CD8-positive, alpha-beta memory T cell (primary cell): ENCODE measurements at regions of chr6 and their contacts with region 1.

Region 1: DNA sequence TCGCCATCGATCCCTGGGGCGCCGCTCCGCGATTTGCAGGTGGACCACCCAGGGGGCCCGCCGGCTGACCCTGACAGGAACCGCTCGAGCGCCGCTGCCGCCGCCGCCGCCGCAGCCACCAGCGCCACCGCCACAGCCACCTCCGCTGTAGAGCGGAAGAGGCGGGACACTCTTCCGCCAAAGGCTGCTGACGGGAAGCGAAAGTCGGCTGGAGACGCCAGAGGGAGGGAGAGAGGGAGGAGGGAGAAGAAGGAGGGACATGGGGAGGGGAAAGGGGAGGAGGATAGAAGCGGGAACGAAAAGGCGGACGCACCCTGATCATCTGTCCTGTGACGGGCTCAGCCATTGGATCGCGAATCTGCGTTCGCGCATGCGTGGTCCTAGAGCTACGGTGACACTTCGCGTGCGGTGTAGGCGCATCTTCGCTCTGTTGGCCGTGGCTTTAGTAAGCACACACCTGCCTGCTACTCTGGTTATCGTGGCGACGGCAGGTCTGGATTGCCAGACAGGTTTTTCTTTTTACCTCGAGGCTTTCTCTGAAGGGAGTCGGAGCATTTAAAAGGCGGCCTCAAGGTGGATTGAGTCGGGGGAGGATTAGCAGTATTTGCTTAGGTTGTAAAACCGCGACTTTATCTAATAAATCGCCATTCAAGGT is at the start of gene TMEM30A:
- DNase-seq: peak; percentile 92 to 97 (median 95)
- H3K4me3 ChIP-seq: peak within 1 kb of the TSS; percentile 91
- H3K4me3 Mint-ChIP-seq: no peak within 1 kb of the TSS
- H3K27ac ChIP-seq: peak within 1 kb of the TSS; percentile 76
- H3K27ac Mint-ChIP-seq: no peak within 1 kb of the TSS
- H3K4me1 ChIP-seq: peaks cover 34% of the 10 kb centered on the region
- H3K4me1 Mint-ChIP-seq: peaks cover 34 to 37% (median 37%) of the 10 kb centered on the region in 3 donors
- H3K27me3 ChIP-seq: no peaks in the 10 kb centered on the region
- H3K27me3 Mint-ChIP-seq: no peaks in the 10 kb centered on the region
- total RNA-seq, gene TMEM30A: 54.8 to 61.8 TPM

Region 2: DNA sequence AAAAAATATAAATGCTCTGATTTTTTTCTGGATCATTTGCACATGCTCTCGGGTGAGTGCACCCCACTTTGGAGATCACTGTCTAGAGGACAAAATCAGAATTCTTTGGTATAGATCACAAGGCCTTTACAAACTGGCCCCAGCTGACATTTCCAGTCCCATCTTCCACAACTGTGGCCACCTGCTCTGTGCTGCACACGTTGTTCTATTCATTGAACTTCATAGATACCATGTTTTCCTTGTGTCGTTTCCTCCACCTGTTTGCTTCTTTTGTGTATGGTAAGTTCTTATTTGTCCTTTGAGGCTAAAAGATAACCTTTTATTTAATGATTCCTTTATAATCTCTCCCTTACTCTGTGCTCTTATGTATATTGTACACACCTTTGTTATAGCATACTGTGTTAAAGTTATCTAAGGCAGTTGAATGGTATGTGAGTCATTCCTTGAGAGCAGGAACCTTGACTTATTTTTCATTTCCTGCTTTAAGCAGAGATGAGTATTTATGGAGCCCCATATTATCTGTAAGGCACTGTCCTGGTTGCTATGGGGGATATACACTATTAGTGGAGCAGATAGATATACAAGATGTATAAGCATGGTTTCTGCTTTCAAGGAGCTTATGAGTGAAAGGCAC is 1619.0 kb before region 1 on chr6:
- CTCF ChIA-PET with region 1: no interaction called
- POLR2A ChIA-PET with region 1: no interaction called
- DNase-seq: no peak
- H3K4me3 ChIP-seq: no peak overlapping the region
- H3K4me3 Mint-ChIP-seq: no peak overlapping the region
- H3K27ac ChIP-seq: no peak overlapping the region
- H3K27ac Mint-ChIP-seq: no peak overlapping the region
- H3K4me1 ChIP-seq: no peaks in the 10 kb centered on the region
- H3K4me1 Mint-ChIP-seq: no peaks in the 10 kb centered on the region
- H3K27me3 ChIP-seq: no peaks in the 10 kb centered on the region
- H3K27me3 Mint-ChIP-seq: peaks cover 10 to 42% of the 10 kb centered on the region in 2 donors

Region 3: DNA sequence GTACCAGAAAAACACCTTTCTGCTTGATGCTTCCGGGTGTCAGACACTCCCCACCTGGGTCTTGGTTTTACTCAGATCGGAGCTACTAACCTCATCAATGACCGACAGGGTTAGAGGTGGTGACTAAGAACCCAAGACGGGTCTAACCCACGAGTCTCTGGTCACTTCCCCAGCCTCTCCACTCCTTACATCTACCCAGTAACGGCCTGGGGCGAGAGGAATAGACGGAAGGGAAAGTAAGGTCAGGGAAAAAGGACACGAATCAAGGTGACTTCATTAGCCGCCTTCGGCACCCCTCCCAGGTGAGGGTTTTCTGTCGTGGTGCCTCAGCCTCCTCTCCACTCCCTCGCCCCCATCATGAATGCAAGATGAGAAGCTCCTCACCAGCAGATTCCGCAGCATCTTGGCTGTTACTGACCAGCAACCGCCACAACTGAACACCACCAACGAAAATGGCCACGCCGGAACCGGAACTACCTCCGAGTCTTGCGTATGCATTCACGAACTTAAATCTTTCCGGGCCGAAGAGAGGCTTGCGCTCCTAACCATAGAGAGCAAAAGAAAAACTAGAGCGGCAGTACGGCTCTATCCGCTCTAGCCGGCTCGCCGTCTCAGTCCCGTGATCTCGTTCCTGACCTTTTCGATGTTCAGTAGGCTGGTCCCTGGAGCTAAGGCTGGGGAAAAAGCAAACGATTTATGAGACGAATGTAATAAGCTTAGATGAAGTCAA is 41.3 kb before region 1 on chr6 and contains the start of gene COX7A2:
- CTCF ChIA-PET with region 1: interaction called, 11 read pairs
- POLR2A ChIA-PET with region 1: interaction called, 10 read pairs
- DNase-seq: peak; percentile 73 to 90 (median 84)
- H3K4me3 ChIP-seq: peak within 1 kb of the TSS; percentile 83
- H3K4me3 Mint-ChIP-seq: peak within 1 kb of the TSS; percentile 97 to 99 (median 98)
- H3K27ac ChIP-seq: peak within 1 kb of the TSS; percentile 84
- H3K27ac Mint-ChIP-seq: peak within 1 kb of the TSS; percentile 95 to 100 (median 99)
- H3K4me1 ChIP-seq: peaks cover 5% of the 10 kb centered on the region
- H3K4me1 Mint-ChIP-seq: peaks cover 27 to 47% (median 34%) of the 10 kb centered on the region in 3 donors
- H3K27me3 ChIP-seq: no peaks in the 10 kb centered on the region
- H3K27me3 Mint-ChIP-seq: peaks cover 4 to 20% of the 10 kb centered on the region in 2 donors
- total RNA-seq, gene COX7A2: 504 to 527 TPM